Thyroid gland (tissue), 4 donors: ENCODE measurements at regions of chr1 and their contacts with region 1.

Region 1: GRCh38 chr1:147515046-147515869 is 26.0 kb upstream of the BCL9 start:
- DNase-seq: peak; percentile 35 to 48
- H3K4me3 ChIP-seq: no peak overlapping the region
- H3K27ac ChIP-seq: peak overlapping the region; percentile 20 to 57 (median 42)
- H3K4me1 ChIP-seq: peaks cover 13 to 15% of the 10 kb centered on the region in 2 donors
- H3K27me3 ChIP-seq: no peaks in the 10 kb centered on the region
- CTCF ChIP-seq: peak in 4 of 6 experiments; percentile 40 to 79 (median 60)
- POLR2A ChIP-seq: no peak

Region 2: DNA sequence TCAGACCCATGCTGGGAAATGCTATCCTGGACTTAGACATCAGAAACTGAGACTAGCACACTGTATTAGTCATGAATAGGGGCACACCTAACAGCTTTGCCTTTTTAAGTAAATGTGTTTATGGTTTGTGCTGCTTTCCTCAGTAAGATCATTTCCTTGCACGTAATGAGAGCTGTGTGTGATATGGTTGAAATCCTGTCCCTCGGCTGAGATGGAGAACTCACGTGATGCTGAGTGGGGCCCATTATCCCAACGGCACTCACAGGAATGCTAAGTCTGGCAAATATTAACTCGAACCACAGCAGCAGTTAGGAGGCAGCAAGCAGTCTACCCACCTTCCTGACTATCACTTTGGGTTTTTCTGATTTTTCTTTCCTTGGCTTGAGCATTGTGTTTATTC is 64.3 kb after region 1 on chr1:
- intact Hi-C with region 1: no loop called
- DNase-seq: peak in 1 of 2 donors; percentile 15
- H3K4me3 ChIP-seq: no peak overlapping the region
- H3K27ac ChIP-seq: no peak overlapping the region
- H3K4me1 ChIP-seq: no peaks in the 10 kb centered on the region
- H3K27me3 ChIP-seq: no peaks in the 10 kb centered on the region
- CTCF ChIP-seq: no peak
- POLR2A ChIP-seq: no peak

Region 3: GRCh38 chr1:147627435-147628110 is 112.3 kb after region 1 on chr1:
- intact Hi-C with region 1: loop called (anchors 5 kb)
- DNase-seq: peak; percentile 63 to 64
- H3K4me3 ChIP-seq: no peak overlapping the region
- H3K27ac ChIP-seq: no peak overlapping the region
- H3K4me1 ChIP-seq: peaks cover 0 to 7% of the 10 kb centered on the region in 2 donors
- H3K27me3 ChIP-seq: no peaks in the 10 kb centered on the region
- CTCF ChIP-seq: peak; percentile 68 to 92 (median 78)
- POLR2A ChIP-seq: no peak

Region 4: DNA sequence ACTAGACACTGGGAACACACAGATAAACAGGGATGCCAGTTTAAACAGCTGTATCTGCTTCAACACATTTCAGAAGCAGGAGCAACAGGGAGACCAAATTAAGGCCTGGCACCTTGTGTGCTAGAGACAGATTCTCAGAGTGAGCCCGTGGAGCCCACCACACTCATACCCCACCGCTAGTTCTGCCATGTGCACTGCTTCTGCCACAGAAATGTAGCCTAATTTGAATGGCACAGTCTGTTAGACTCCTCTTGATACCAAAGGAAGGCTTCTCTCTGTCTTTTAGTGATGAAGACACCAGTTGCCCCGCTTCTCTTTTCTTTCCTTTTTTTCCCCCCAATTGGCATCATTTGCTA is 184.4 kb after region 1 on chr1:
- intact Hi-C with region 1: loop called (anchors 10 kb)
- DNase-seq: no peak
- H3K4me3 ChIP-seq: no peak overlapping the region
- H3K27ac ChIP-seq: no peak overlapping the region
- H3K4me1 ChIP-seq: no peaks in the 10 kb centered on the region
- H3K27me3 ChIP-seq: no peaks in the 10 kb centered on the region
- CTCF ChIP-seq: no peak
- POLR2A ChIP-seq: no peak